Activated CD4-positive, alpha-beta T cell treated with anti-CD3 and anti-CD28 coated beads, Interleukin-2, amount 10 ng/mL, durations not matched to agents 24 days and 14 days (primary cell): ENCODE measurements at regions of chr2 and their contacts with region 1.

Region 1: GRCh38 chr2:217510771-217511291 is 492.0 kb downstream of the TNS1 start:
- DNase-seq: peak; percentile 80
- H3K4me3 Mint-ChIP-seq: no peak overlapping the region
- H3K27ac Mint-ChIP-seq: no peak overlapping the region
- H3K4me1 Mint-ChIP-seq: peaks cover 5% of the 10 kb centered on the region
- H3K27me3 Mint-ChIP-seq: peaks cover 7% of the 10 kb centered on the region

Region 2: GRCh38 chr2:216683846-216684507 is 826.9 kb before region 1 on chr2:
- intact Hi-C with region 1: loop called (anchors 1 kb)
- DNase-seq: no peak
- H3K4me3 Mint-ChIP-seq: no peak overlapping the region
- H3K27ac Mint-ChIP-seq: no peak overlapping the region
- H3K4me1 Mint-ChIP-seq: peaks cover 9% of the 10 kb centered on the region
- H3K27me3 Mint-ChIP-seq: peaks cover 25% of the 10 kb centered on the region

Region 3: DNA sequence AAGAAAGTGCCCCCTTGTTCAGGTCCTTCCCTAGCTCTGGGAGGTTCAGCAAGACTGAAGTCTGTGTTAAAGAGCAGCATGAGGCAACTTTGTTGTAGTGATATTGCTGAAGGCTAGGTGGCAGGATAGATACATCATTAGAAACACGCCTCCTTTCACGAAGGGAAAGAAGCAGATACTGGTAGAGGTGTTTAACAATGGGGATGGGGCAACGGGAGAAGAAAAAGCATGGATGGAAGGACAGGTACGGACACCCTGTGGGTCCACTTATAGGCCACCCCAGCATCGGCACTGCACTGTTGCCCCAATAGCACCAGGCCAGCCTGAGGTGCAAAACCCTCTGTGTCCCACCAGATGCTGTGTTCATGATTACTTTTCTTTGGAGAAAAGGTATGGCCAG is 811.9 kb before region 1 on chr2:
- intact Hi-C with region 1: loop called (anchors 2 kb)
- DNase-seq: peak; percentile 77
- H3K4me3 Mint-ChIP-seq: no peak overlapping the region
- H3K27ac Mint-ChIP-seq: no peak overlapping the region
- H3K4me1 Mint-ChIP-seq: peaks cover 4% of the 10 kb centered on the region
- H3K27me3 Mint-ChIP-seq: peaks cover 45% of the 10 kb centered on the region

Region 4: DNA sequence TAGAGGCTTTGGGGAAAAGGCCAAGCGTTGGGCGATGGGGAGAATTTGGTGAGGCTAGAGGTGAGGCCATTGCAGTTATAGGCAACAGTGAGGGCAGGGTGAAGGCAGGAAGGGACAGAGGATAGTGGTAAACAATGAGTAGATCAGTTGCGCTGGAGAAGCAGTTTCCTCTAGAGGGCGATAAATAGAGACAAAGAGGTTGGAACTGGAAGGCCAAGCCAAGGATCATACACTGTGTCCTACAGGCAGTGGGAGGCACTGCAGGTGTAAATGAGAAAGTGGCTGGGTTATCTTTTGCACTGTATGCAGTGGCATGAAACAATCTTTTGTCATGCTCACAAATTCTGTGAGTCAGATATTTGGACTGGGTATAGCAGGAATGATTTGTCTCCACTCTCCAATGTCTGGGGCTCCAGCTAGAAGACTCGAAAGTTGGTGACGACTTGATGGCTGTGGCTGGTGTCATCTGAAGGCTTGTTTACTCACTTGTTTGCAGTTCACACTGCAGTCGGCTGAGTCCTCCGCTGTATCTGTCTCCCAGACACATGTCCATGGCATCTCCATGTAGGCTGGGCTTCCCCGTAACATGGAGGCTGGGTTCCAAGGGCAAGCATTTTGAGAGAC is 733.1 kb before region 1 on chr2:
- intact Hi-C with region 1: loop called (anchors 5 kb)
- DNase-seq: peak; percentile 86
- H3K4me3 Mint-ChIP-seq: no peak overlapping the region
- H3K27ac Mint-ChIP-seq: no peak overlapping the region
- H3K4me1 Mint-ChIP-seq: peaks cover 8% of the 10 kb centered on the region
- H3K27me3 Mint-ChIP-seq: peaks cover 20% of the 10 kb centered on the region

Region 5: GRCh38 chr2:217551252-217551899 is 40.5 kb after region 1 on chr2:
- intact Hi-C with region 1: no loop called
- DNase-seq: no peak
- H3K4me3 Mint-ChIP-seq: no peak overlapping the region
- H3K27ac Mint-ChIP-seq: no peak overlapping the region
- H3K4me1 Mint-ChIP-seq: no peaks in the 10 kb centered on the region
- H3K27me3 Mint-ChIP-seq: peaks cover 2% of the 10 kb centered on the region

Region 6: DNA sequence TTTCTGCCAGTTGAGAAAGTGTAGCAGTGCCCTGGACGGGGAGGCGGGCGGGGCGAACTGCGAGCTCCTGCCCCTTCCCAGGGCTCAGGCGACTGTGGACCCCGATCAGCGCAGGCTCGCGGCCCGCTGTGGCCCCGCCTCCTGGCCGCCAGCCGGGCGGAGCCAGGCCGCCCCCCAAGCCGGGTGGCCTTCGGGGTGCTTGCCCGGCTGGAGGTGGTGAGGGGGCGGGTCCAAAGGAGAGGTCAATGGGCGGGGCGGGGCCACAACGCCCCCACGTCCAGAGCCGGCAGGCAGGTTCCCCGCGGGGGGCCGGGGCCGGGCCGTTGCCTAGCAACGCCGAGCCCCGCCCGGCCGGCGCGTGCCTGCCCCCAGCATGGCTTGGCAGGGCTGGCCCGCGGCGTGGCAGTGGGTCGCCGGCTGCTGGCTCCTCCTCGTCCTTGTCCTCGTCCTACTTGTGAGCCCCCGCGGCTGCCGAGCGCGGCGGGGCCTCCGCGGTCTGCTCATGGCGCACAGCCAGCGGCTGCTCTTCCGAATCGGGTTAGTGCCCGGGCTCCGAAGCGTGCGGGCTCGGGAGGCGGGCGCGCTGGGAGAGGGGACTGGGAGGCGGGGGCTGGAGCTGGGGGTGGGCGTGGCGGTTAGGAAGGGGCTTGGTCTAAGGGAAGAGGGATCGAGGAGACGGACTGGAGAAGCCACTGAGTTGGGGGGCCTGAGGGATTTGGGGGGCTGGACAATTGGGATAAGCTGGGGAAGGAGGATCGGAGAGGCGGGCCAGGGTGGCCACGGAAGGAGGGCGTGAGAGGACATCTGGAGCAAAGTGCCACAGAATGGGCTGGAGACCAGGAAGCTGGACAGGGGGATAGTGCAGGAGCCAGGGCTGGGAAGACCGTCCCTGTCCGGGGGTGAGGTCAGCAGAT is 812.3 kb after region 1 on chr2:
- intact Hi-C with region 1: no loop called
- DNase-seq: peak; percentile 85
- H3K4me3 Mint-ChIP-seq: peak overlapping the region; percentile 88
- H3K27ac Mint-ChIP-seq: peak overlapping the region; percentile 76
- H3K4me1 Mint-ChIP-seq: peaks cover 15% of the 10 kb centered on the region
- H3K27me3 Mint-ChIP-seq: peaks cover 16% of the 10 kb centered on the region